Right ventricle myocardium superior (tissue), 1 donor: ENCODE measurements at regions of chr16 and their contacts with region 1.

Region 1: DNA sequence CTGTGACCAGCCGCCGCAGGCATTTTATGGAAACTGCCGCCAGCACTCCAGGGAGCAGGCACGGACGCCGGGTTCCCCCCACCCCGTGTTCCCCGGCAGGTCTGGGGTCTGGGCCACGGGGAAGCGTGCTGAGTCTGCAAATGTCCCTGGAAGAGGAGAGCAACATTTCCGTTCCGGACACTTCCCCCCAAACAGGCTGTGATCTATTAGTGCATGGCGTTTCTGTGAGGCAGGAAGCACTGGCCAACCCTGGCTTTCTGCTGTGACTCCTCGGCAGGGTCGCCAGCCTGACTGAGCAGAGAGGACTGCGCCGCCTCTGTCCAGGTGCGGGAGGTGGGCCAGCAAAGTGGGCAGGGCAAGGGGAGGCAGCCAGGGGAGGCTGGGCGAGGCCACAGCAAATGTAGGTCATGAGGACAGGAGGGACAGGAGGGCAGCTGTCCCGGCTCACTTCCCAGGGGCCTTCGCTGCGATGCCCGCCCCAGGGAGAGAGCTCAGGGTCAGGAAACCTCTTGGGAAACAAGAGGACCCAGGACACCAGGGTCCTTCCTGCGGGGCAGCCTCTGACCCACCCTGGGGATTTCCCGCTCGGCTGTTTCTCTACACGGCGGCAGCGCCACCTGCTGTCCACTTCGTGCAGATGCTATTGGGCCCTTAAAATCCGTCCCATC is 9.5 kb downstream of the FOXF1 start:
- DNase-seq: peak; percentile 77
- ATAC-seq: peak; percentile 69

Region 2: GRCh38 chr16:86072328-86073102 is 447.3 kb before region 1 on chr16:
- intact Hi-C with region 1: loop called (anchors 1 kb)
- DNase-seq: peak; percentile 67
- ATAC-seq: peak; percentile 76

Region 3: DNA sequence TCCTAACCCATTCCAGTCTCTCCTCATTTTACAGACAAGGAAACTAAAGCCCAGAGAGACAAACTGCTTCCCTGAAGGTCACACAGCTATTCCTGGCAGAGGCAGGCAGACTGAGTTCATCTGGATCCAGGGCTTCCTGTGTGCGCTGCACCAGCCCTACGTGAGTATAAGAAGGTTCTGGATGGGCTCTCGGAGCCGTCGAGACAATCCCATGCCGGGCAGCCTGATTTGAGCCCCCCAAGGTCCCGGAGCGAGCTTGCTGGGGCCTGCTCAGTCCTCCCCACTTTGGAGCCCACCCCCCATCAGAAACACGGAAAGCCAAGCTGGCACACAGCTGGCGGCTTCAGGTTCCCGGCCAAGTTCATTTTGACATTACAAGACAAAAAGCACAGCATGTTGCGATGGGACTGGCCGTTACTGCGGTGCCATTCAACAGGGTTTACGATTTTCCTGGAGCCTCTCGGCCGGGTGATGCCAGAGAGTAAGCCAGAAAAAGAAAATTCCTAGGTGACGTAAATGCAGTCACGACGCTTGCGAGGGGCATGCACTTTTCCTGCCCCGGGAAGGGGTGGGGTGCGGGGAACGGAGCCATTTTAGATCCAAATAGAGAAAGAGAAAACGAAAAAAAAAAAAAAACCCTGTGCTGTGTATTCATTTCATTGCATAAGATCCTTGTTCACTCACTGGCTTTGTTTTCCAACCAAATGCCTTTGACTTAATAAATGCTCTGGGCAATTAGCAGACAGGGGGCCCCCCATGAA is 176.6 kb before region 1 on chr16:
- intact Hi-C with region 1: loop called (anchors 5 kb)
- DNase-seq: peak; percentile 56
- ATAC-seq: peak; percentile 10

Region 4: GRCh38 chr16:86457501-86458148 is 62.2 kb before region 1 on chr16:
- intact Hi-C with region 1: no loop called
- DNase-seq: no peak
- ATAC-seq: peak; percentile 64

Region 5: DNA sequence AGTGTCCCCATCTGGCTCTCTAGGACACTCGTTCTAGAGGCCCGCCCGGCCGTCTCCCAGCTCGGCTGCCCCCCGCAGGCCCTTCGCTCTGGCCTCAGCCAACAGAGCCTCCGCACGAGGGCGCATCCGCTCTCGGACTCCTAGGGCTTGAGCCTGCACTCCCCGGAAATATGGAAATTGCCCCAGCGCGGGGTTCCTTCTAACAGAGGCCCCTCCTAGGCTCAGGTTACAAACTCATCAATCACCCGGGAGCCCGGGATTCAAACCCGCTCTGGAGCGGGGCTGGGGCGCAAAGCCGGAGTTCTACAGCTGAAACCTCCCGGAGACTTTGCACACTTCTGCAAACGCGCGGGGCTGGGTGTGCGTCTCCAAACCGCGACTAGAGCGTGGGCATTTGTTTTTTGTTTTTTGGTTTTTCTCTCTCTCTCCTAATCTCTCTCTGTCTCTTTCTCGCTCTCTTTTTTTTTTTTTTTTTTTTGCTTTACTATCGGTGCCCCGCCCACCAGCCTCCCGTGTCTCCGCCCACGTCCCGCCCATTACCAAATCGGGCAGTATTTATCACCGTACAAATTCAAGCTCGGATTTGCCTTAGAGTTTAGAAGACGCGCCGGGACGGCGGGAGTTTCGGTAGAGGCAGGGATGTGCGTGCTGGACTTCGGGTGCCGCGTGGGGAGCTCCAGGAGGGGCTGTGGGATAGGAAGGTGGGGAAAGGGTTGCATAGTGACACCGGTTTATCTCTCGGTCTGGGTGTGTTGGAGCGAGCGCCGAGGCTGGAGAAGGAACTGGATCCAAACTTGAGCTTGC is 56.2 kb after region 1 on chr16:
- intact Hi-C with region 1: no loop called
- DNase-seq: peak; percentile 91
- ATAC-seq: peak; percentile 91